HEK293 (cell line): ENCODE measurements at regions of chr10 and their contacts with region 1.

Region 1: DNA sequence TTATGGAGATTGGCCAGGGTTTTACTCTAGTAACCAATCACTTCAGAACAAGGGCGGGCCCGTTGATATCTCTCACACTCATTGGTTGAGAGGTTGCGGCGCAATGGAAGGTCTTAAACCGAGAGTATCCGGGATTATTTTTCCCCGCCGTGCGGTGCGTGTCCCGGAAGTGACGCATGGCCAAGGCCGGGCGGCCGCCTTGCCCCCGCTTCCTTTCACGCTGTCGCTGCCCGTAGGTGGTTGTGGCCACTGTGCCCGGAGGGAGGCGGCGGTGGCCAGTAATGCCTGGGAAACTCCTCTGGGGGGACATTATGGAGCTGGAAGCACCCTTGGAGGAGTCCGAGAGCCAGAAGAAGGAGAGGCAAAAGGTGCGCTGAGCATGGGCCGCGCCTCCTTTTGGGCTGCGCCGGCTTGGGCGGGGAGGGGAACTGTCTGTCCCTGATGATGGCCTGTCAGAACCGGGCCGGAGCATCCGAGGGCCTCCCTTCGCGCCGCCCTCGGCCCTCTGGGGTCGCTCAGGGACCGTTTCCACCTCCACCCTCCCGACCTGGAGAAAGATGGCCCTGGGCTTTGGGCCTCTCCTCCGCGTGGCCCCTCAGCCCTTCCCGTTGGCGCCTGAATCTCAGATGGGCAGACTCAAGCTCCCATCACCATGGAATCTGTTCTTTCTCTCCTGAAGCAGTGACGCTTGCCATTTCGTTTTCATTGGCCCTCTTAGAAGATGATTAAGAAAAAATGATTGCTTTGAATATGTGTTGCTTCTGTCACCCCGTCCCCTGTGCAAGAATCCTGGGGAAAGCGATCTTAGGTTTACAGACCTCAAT is at the start of gene DDX50:
- H3K4me3 ChIP-seq: peak within 1 kb of the TSS; percentile 82
- H3K27ac ChIP-seq: peak within 1 kb of the TSS; percentile 94
- H3K4me1 ChIP-seq: 0 out of 2 replicates have a peak, but pooled peaks cover 3% of the 10 kb centered on the region
- CTCF ChIP-seq: peak; percentile 88

Region 2: GRCh38 chr10:68796605-68797004 is 104.7 kb before region 1 on chr10:
- CTCF ChIA-PET with region 1: interaction called, 16 read pairs
- POLR2A ChIA-PET with region 1: interaction called, 3 read pairs
- H3K4me3 ChIP-seq: no peak overlapping the region
- H3K27ac ChIP-seq: no peak overlapping the region
- H3K4me1 ChIP-seq: peaks cover 9% of the 10 kb centered on the region
- CTCF ChIP-seq: no peak

Region 3: DNA sequence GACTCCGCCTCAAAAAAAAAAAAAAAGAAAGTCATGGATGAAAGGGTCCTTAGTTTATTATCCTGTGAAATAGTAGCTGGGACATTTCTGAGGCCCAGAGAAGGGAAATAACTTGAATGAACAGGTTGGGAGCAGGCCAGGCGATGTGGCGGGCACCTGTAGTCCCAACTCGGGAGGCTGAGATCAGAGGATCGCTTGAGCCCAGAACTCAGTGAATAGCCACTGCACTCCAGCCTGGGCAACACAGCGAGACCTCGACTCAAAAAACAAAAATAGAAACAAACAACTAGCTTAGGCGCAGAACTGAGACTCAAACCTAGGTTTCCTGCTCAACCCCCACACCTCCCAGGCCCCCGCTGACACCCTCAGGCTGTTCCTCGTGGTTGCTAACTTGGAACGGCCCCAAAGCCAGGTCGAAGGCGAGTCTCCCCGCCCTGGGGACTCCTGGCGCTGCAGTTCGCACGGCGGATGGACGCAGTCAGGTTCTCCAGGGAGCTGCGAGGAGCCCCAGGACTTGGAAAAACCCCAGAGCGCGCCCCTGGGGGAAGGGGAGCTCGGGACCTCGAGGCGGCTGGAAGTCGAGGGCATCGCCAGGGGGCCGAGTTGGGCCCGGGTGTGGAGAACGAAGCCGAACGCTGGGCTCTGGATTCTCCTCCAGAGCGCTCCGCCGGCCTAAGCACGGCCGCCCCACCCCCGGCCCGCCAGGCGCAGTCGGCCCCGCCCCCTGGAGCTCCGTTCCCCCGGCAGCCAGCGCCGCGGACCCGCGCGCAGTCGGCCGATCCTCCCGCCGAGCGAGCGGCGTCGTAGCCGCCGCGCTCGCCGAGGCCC is 74.3 kb before region 1 on chr10 and contains the start of gene STOX1:
- CTCF ChIA-PET with region 1: interaction called, 3 read pairs
- POLR2A ChIA-PET with region 1: interaction called, 13 read pairs
- H3K4me3 ChIP-seq: peak within 1 kb of the TSS; percentile 63
- H3K27ac ChIP-seq: peak within 1 kb of the TSS; percentile 84
- H3K4me1 ChIP-seq: peaks cover 3% of the 10 kb centered on the region; the same call in 1 of the 2 replicates
- CTCF ChIP-seq: peak; percentile 81